IMR-90 (cell line): ENCODE measurements at regions of chr2 and their contacts with region 1.

Region 1: DNA sequence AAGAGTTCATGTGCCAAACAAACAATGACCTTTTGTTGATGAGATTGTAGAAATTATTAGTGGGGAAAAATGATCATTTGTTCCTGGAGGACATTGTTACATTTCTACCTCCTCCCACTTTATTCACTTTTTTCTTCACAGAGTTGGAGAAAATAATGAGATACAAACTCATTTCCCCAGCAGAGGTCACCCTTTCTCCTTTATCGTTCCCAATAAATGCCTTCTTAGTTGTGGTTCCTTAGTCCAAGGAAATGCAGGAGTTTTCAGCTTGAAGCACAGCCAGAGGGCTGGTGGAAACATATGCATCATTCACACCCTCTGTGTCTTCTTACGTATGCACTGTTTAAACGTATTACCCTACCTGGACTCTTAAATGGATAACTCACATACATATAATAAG is 108.8 kb downstream of the SLC4A3 start:
- DNase-seq: peak; percentile 81
- ATAC-seq: peak; percentile 87
- H3K4me3 ChIP-seq: no peak overlapping the region
- H3K27ac ChIP-seq: no peak overlapping the region
- H3K4me1 ChIP-seq: no peaks in the 10 kb centered on the region
- H3K27me3 ChIP-seq: 0 out of 2 replicates have a peak, but pooled peaks cover under 1% of the 10 kb centered on the region
- CTCF ChIP-seq: peak; percentile 79
- POLR2A ChIP-seq: no peak
- RAD21 ChIP-seq: peak; percentile 82

Region 2: DNA sequence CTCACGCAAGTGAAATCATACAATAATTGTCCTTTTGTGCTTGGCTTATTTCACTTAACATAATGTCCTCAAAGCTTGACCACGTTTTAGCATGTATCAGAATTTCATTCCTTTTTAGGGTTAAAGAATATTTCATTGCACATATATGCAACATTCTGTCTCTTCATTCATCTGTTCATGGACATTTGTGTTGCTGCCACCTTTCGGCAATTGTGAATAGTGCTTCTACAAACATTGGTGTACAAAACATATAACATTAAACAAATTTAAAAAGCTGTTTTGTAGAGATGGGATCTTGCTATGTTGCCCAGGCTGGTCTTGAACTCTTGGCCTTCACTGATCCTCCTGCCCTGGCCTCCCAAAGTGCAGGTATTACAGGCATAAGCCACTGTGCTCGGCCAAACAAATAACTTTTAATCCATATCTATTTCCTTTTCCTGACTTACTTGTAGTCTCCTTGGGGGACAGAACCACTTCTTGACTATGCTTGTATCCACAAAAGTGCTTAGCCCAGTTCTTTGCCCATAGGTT is 100.5 kb after region 1 on chr2:
- CTCF ChIA-PET with region 1: no interaction called
- POLR2A ChIA-PET with region 1: no interaction called
- dilution Hi-C with region 1: no loop called
- in situ Hi-C with region 1: no loop called
- intact Hi-C with region 1: loop called (anchors 1 kb)
- DNase-seq: peak; percentile 17
- ATAC-seq: no peak
- H3K4me3 ChIP-seq: no peak overlapping the region
- H3K27ac ChIP-seq: no peak overlapping the region
- H3K4me1 ChIP-seq: no peaks in the 10 kb centered on the region
- H3K27me3 ChIP-seq: no peaks in the 10 kb centered on the region; the same call in 1 of the 2 replicates
- CTCF ChIP-seq: 0 out of 2 replicates have a peak, but pooled peaks have one; percentile 20
- POLR2A ChIP-seq: no peak
- RAD21 ChIP-seq: no peak

Region 3: GRCh38 chr2:219976871-219977270 is 240.7 kb after region 1 on chr2:
- CTCF ChIA-PET with region 1: no interaction called
- POLR2A ChIA-PET with region 1: no interaction called
- dilution Hi-C with region 1: no loop called
- in situ Hi-C with region 1: no loop called
- intact Hi-C with region 1: no loop called
- DNase-seq: no peak
- ATAC-seq: no peak
- H3K4me3 ChIP-seq: no peak overlapping the region
- H3K27ac ChIP-seq: no peak overlapping the region
- H3K4me1 ChIP-seq: no peaks in the 10 kb centered on the region
- H3K27me3 ChIP-seq: no peaks in the 10 kb centered on the region
- CTCF ChIP-seq: no peak
- POLR2A ChIP-seq: no peak
- RAD21 ChIP-seq: no peak

Region 4: DNA sequence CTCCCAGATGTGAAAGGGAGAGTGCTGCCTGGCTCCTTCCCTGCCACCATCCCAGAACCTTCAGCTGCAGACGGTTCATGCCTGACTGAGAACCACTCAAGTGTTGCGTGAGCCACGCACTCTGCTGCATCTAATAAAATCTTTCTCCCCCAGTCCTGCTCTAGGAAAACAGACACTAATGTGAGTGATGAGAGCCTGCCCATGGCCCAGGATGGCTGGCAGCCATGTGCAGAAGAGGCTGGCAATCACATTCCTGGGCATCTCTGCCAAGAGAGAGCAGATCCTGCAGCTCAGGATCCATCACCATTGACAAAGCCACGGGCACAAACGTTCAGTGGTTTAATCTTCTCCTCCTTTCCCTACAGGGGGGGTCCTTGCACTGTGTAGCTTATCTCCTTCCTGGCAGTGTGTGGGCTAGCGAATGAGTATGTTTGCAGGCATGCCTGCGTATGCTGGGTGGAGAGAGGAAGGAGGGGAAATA is 368.7 kb after region 1 on chr2:
- CTCF ChIA-PET with region 1: interaction called, 3 read pairs
- POLR2A ChIA-PET with region 1: no interaction called
- dilution Hi-C with region 1: no loop called
- in situ Hi-C with region 1: no loop called
- intact Hi-C with region 1: loop called (anchors 2 kb)
- DNase-seq: peak; percentile 91
- ATAC-seq: peak; percentile 100
- H3K4me3 ChIP-seq: no peak overlapping the region
- H3K27ac ChIP-seq: no peak overlapping the region
- H3K4me1 ChIP-seq: peaks cover 3% of the 10 kb centered on the region
- H3K27me3 ChIP-seq: no peaks in the 10 kb centered on the region
- CTCF ChIP-seq: peak; percentile 90
- POLR2A ChIP-seq: peak; percentile 63; the same call in 1 of the 2 replicates
- RAD21 ChIP-seq: peak; percentile 98

Region 5: GRCh38 chr2:220460257-220460985 is 724.2 kb after region 1 on chr2:
- CTCF ChIA-PET with region 1: no interaction called
- POLR2A ChIA-PET with region 1: no interaction called
- dilution Hi-C with region 1: no loop called
- in situ Hi-C with region 1: no loop called
- intact Hi-C with region 1: loop called (anchors 10 kb)
- DNase-seq: peak; percentile 12
- ATAC-seq: no peak
- H3K4me3 ChIP-seq: no peak overlapping the region
- H3K27ac ChIP-seq: no peak overlapping the region
- H3K4me1 ChIP-seq: no peaks in the 10 kb centered on the region
- H3K27me3 ChIP-seq: no peaks in the 10 kb centered on the region
- CTCF ChIP-seq: no peak
- POLR2A ChIP-seq: no peak
- RAD21 ChIP-seq: peak; percentile 20

Region 6: GRCh38 chr2:220687231-220687843 is 951.1 kb after region 1 on chr2:
- CTCF ChIA-PET with region 1: interaction called, 3 read pairs
- POLR2A ChIA-PET with region 1: no interaction called
- dilution Hi-C with region 1: no loop called
- in situ Hi-C with region 1: no loop called
- intact Hi-C with region 1: loop called (anchors 2 kb)
- DNase-seq: peak; percentile 60
- ATAC-seq: peak; percentile 87
- H3K4me3 ChIP-seq: no peak overlapping the region
- H3K27ac ChIP-seq: no peak overlapping the region
- H3K4me1 ChIP-seq: no peaks in the 10 kb centered on the region
- H3K27me3 ChIP-seq: no peaks in the 10 kb centered on the region
- CTCF ChIP-seq: peak; percentile 74
- POLR2A ChIP-seq: no peak
- RAD21 ChIP-seq: peak; percentile 83

Region 7: GRCh38 chr2:221104361-221104811 is 1368.2 kb after region 1 on chr2:
- CTCF ChIA-PET with region 1: no interaction called
- POLR2A ChIA-PET with region 1: interaction called, 4 read pairs
- dilution Hi-C with region 1: no loop called
- in situ Hi-C with region 1: no loop called
- intact Hi-C with region 1: loop called (anchors 10 kb)
- DNase-seq: peak; percentile 64
- ATAC-seq: peak; percentile 85
- H3K4me3 ChIP-seq: no peak overlapping the region
- H3K27ac ChIP-seq: 0 out of 2 replicates have a peak overlapping the region, but pooled peaks have one; percentile 2
- H3K4me1 ChIP-seq: peaks cover 9% of the 10 kb centered on the region
- H3K27me3 ChIP-seq: no peaks in the 10 kb centered on the region; the same call in 1 of the 2 replicates
- CTCF ChIP-seq: 0 out of 2 replicates have a peak, but pooled peaks have one; percentile 12
- POLR2A ChIP-seq: no peak
- RAD21 ChIP-seq: no peak